ENCODE measurements at regions of chr18 and their contacts with region 1.

Region 1: DNA sequence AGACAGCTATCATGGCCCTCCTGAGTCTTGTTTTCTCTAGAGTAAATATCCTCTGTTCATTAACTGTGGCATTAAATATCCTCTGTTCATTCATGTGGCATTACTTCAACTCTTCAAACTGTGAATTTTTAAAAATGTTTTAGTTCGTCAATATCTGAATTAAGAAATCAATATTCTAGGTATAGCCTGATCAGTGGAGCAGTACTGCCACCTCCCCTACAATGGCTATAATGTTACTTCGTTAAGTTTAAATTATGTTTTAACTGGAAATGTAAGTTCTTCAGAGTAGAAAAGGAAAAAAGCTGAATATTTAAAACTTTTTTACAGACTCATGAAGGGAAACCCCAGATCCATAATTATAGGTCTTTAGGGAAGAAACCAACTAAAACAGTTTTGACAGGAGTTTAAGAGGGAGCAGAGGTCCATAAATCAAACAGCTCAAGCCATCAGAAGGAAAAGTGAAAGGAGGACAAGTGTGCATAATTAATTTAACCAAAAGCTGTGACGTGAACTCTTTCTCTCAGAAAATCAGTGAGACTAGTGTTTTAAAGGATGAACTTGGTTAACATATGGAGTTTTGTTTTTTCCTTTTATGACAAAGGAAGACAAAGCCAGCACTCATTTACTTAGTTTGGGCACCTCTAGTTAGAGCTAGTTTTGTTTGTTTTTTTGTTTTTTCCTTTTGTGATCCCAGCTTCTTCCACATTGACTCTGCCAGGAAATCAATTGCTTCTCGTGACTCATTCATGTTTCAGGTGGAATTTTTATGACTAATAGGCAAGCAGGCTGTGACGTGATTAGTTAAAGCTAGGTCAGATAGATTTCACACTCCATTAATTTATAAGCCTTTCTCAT is 44.9 kb downstream of the RBBP8 start:
- DNase-seq: no peak
- ATAC-seq: peak in 1 of 4 donors; percentile 47
- H3K4me3 ChIP-seq: no peak overlapping the region
- H3K27ac ChIP-seq: peak overlapping the region in 1 of 12 donors; percentile 23
- H3K4me1 ChIP-seq: peaks cover 0 to 20% (median 0%) of the 10 kb centered on the region in 12 donors
- H3K27me3 ChIP-seq: no peaks in the 10 kb centered on the region
- CTCF ChIP-seq: no peak
- POLR2A ChIP-seq: no peak

Region 2: GRCh38 chr18:22913857-22914256 is 64.2 kb before region 1 on chr18:
- intact Hi-C with region 1: no loop called
- DNase-seq: no peak
- ATAC-seq: peak in 1 of 4 donors; percentile 27
- H3K4me3 ChIP-seq: no peak overlapping the region
- H3K27ac ChIP-seq: no peak overlapping the region
- H3K4me1 ChIP-seq: no peaks in the 10 kb centered on the region
- H3K27me3 ChIP-seq: no peaks in the 10 kb centered on the region
- CTCF ChIP-seq: no peak
- POLR2A ChIP-seq: no peak

Region 3: DNA sequence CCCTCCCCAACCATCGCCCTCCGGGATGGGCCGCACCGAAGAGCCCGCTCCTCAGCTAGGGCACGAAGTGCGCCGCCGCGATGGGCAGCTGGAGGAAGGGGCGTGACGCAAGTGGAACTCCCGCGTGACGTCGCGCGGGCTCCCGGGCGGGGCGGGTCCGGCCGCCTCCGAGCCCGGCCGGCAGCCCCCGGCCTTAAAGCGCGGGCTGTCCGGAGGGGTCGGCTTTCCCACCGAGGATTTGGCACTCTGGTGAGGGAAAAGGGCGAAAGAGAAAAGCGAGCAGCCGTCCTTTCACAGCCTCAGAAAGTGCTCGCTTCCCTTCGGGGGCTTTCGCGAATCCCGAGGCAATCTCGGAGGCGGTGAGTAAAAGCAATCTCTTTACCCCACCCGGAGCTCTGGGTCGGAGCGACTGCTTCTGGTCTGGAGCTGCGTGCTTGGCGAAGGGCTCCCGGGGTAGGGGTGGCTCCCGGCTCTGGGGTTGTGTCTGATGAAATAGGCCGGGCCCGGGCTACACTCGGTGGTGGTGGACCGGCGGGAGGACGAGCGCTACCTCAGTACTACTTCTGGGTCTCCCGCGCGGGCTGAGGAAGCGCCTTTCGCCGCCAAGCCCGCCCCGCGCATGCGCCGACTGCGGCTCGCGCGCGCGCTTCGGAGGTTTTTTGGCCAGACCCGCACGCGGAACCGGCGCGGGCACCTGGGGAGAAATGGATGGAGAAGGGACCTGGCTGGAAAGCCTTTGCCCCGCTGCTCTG is 44.7 kb before region 1 on chr18 and contains the start of gene RBBP8:
- intact Hi-C with region 1: loop called in 8 of 10 experiments (anchors 2 to 10 kb)
- DNase-seq: peak; percentile 87 to 93 (median 88)
- ATAC-seq: peak; percentile 92 to 99 (median 98)
- H3K4me3 ChIP-seq: peak within 1 kb of the TSS; percentile 68 to 93 (median 78)
- H3K27ac ChIP-seq: peak within 1 kb of the TSS; percentile 83 to 99 (median 96)
- H3K4me1 ChIP-seq: peaks cover 0 to 18% (median 5%) of the 10 kb centered on the region in 12 donors
- H3K27me3 ChIP-seq: no peaks in the 10 kb centered on the region
- CTCF ChIP-seq: no peak
- POLR2A ChIP-seq: peak in 1 of 2 donors; percentile 63
- total RNA-seq, gene RBBP8: 5.1 to 12.2 (median 8.6) TPM

Region 4: DNA sequence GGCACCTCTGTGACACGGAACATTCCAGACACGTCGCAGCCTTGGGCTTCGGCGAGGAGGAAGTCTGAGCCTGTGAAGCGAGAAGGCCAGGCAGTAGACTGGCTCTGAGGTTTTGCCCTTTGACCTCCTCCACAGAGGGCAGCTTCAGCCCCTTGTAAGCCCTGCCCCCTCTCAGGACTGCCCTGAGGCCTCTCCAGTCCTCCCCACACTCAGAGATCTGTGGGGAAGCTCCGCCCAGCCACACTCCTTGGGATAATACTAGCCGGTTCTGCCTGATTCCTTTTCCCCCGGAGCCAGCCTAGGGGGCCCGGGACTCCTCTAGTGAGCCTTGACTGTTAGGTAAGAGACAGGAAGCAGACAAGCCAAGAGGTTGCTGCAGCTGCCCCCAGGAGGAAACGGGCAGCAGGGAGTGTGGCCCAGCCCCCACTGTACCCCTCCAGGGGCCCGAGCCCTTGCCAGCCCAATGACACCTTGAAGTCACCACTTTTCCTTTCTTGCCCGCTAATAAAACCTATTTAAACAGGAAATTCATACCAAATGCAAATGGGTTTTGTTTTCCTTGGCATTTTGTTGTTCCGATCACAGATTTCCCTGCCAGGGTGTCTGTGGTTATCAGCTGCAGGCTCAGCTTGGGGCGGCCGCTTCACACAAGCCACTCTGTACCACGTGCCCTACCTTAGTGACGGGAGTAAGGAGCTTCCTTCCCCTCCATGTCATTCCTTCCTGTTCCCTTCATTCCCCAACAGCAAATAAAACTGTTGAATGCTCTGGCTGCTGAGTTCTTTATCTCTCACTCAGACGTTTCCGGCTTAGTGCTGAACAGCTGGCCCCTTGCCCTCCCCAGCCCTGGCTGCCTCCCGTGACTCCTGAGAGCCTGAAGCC is 281.9 kb after region 1 on chr18:
- intact Hi-C with region 1: no loop called
- DNase-seq: peak; percentile 76 to 85 (median 81)
- ATAC-seq: peak; percentile 76 to 90 (median 83)
- H3K4me3 ChIP-seq: peak overlapping the region in 10 of 12 donors; percentile 16 to 47 (median 26)
- H3K27ac ChIP-seq: peak overlapping the region; percentile 25 to 86 (median 67)
- H3K4me1 ChIP-seq: peaks cover 8 to 40% (median 20%) of the 10 kb centered on the region in 12 donors
- H3K27me3 ChIP-seq: no peaks in the 10 kb centered on the region
- CTCF ChIP-seq: no peak
- POLR2A ChIP-seq: no peak

Measured in heart left ventricle (tissue), 16 donors.